ENCODE measurements at regions of chr2 and their contacts with region 1.

Region 1: GRCh38 chr2:20446917-20447436 is at the start of gene RHOB:
- DNase-seq: peak; percentile 98
- ATAC-seq: peak; percentile 93
- H3K4me3 ChIP-seq: peak within 1 kb of the TSS; percentile 73 to 81
- H3K27ac ChIP-seq: peak within 1 kb of the TSS; percentile 85 to 93
- H3K4me1 ChIP-seq: no peaks in the 10 kb centered on the region
- H3K27me3 ChIP-seq: no peaks in the 10 kb centered on the region
- total RNA-seq, gene RHOB: 271 to 1,049 TPM

Region 2: GRCh38 chr2:20411361-20411894 is 35.5 kb before region 1 on chr2:
- intact Hi-C with region 1: loop called in 1 of 2 experiments (anchors 5 kb)
- DNase-seq: peak; percentile 91 to 96
- ATAC-seq: peak; percentile 95
- H3K4me3 ChIP-seq: no peak overlapping the region
- H3K27ac ChIP-seq: no peak overlapping the region
- H3K4me1 ChIP-seq: no peaks in the 10 kb centered on the region
- H3K27me3 ChIP-seq: no peaks in the 10 kb centered on the region

Region 3: GRCh38 chr2:20578895-20579825 is 132.2 kb after region 1 on chr2:
- intact Hi-C with region 1: loop called in 1 of 2 experiments (anchors 5 kb)
- DNase-seq: peak; percentile 90 to 92
- ATAC-seq: peak; percentile 93
- H3K4me3 ChIP-seq: no peak overlapping the region
- H3K27ac ChIP-seq: peak overlapping the region; percentile 66 to 67
- H3K4me1 ChIP-seq: no peaks in the 10 kb centered on the region
- H3K27me3 ChIP-seq: no peaks in the 10 kb centered on the region

Region 4: GRCh38 chr2:20617892-20618467 is 171.0 kb after region 1 on chr2:
- intact Hi-C with region 1: loop called (anchors 5 kb)
- DNase-seq: peak; percentile 98 to 99
- ATAC-seq: peak; percentile 92
- H3K4me3 ChIP-seq: no peak overlapping the region
- H3K27ac ChIP-seq: peak overlapping the region; percentile 89 to 99
- H3K4me1 ChIP-seq: peaks cover 2 to 5% of the 10 kb centered on the region in 2 donors
- H3K27me3 ChIP-seq: no peaks in the 10 kb centered on the region

Region 5: DNA sequence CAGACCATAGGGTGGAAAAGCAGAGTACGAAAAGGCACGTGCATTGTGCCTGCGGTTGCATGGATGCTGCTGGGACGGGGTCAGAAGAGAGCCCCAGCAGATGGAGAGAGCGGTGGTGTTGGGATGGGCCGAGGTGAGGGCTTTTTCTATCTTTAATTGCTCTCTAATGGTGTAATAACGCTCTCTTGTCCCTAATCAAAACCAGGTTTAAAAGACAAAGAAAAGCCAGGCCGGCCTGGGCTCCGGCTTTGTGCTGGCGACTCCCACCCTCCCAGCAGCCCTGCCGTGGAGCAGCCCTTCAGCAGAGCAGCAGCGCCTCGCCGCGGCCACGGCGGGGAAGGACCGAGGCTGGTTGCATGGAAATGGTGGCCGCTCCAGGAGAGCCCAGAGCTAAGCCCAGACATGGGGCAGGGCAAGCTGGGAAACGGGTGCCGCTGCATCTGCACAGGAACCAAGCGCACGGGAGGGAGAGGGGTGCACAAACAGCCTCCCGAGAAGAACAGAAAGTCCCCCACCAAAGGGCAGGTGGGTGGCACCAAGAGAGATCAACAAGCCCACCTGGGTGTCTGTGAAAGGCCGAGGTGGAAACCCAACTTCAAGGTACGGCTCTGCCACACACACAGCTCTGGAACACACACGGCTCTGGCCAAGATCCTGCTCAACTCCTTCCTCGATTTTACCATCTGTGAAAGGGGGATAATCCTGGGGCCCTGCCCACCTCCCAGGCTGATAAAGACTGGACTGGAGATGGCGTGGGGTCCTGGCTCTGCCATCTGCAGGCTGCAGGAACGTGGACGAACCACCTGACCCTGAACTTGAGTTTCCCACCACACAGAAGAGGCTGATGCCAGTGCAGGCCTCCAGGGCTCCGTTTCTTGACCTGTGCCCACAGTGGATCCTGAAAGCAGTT is 189.0 kb after region 1 on chr2:
- intact Hi-C with region 1: loop called (anchors 1 to 2 kb)
- DNase-seq: peak; percentile 89 to 96
- ATAC-seq: peak; percentile 91
- H3K4me3 ChIP-seq: no peak overlapping the region
- H3K27ac ChIP-seq: peak overlapping the region; percentile 88 to 91
- H3K4me1 ChIP-seq: no peaks in the 10 kb centered on the region
- H3K27me3 ChIP-seq: no peaks in the 10 kb centered on the region

Region 6: GRCh38 chr2:20642055-20642971 is 195.3 kb after region 1 on chr2:
- intact Hi-C with region 1: loop called in 1 of 2 experiments (anchors 1 kb)
- DNase-seq: peak; percentile 88 to 94
- ATAC-seq: peak; percentile 92
- H3K4me3 ChIP-seq: no peak overlapping the region
- H3K27ac ChIP-seq: peak overlapping the region; percentile 72 to 97
- H3K4me1 ChIP-seq: no peaks in the 10 kb centered on the region
- H3K27me3 ChIP-seq: no peaks in the 10 kb centered on the region

Measured in aorta (tissue), 5 donors.